ENCODE measurements at regions of chr15 and their contacts with region 1.

Region 1: GRCh38 chr15:40564591-40565332 is at the start of gene CCDC32:
- H3K4me3 Mint-ChIP-seq: peak within 1 kb of the TSS; percentile 92
- H3K27ac Mint-ChIP-seq: peak within 1 kb of the TSS; percentile 96
- H3K4me1 Mint-ChIP-seq: peaks cover 28% of the 10 kb centered on the region
- H3K27me3 Mint-ChIP-seq: peaks cover 9% of the 10 kb centered on the region

Region 2: GRCh38 chr15:40160689-40161688 is 403.8 kb before region 1 on chr15 and contains the start of gene BUB1B:
- intact Hi-C with region 1: no loop called
- H3K4me3 Mint-ChIP-seq: no peak within 1 kb of the TSS
- H3K27ac Mint-ChIP-seq: no peak within 1 kb of the TSS
- H3K4me1 Mint-ChIP-seq: peaks cover 17% of the 10 kb centered on the region
- H3K27me3 Mint-ChIP-seq: no peaks in the 10 kb centered on the region

Region 3: DNA sequence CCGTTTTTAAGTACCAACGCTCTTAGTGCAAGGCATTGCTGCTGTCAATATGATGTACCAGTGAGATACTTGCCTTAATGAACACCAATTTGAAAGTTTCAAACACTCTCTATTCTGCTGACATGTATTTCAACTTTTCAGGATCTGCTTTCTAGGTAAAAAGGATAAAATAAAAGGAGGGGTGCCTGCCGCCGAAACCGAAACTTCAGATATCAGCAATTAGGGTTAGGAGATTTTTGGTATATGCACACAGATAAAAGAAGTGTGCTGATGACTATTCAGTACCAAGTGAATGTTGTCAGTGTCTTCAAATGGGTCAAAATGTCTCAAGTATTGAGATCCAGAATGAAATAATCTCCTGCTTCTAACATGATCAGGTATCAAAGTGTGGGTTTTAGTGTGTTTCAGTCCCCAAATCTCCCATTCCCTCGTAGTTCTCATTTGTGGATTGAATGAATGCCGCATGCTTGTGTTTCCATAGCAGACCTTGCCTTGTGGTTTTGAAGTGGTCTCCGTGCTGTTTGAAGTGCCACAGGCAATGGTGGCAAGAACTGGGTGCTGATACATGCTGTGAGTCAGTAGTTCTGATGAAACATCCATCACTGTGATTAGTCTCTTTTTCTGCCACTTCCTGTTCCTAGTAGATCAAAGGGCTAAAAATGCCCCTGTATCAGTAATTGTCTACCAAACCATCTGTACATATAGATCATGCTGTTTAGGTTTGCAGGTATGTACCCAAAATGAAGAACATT is 71.5 kb before region 1 on chr15:
- intact Hi-C with region 1: no loop called
- H3K4me3 Mint-ChIP-seq: no peak overlapping the region
- H3K27ac Mint-ChIP-seq: no peak overlapping the region
- H3K4me1 Mint-ChIP-seq: peaks cover 14% of the 10 kb centered on the region
- H3K27me3 Mint-ChIP-seq: peaks cover 12% of the 10 kb centered on the region

Region 4: GRCh38 chr15:40550341-40551037 is 14.3 kb before region 1 on chr15:
- intact Hi-C with region 1: loop called (anchors 2 kb)
- H3K4me3 Mint-ChIP-seq: peak overlapping the region; percentile 39
- H3K27ac Mint-ChIP-seq: peak overlapping the region; percentile 18
- H3K4me1 Mint-ChIP-seq: peaks cover 51% of the 10 kb centered on the region
- H3K27me3 Mint-ChIP-seq: no peaks in the 10 kb centered on the region

Region 5: GRCh38 chr15:40763801-40764732 is 199.3 kb after region 1 on chr15 and contains the start of gene GCHFR:
- intact Hi-C with region 1: loop called (anchors 10 kb)
- H3K4me3 Mint-ChIP-seq: peak within 1 kb of the TSS; percentile 77
- H3K27ac Mint-ChIP-seq: peak within 1 kb of the TSS; percentile 80
- H3K4me1 Mint-ChIP-seq: peaks cover 42% of the 10 kb centered on the region
- H3K27me3 Mint-ChIP-seq: peaks cover 2% of the 10 kb centered on the region